Common myeloid progenitor, CD34-positive (primary cell): ENCODE measurements at regions of chr20 and their contacts with region 1.

Region 1: GRCh38 chr20:20860078-20860806 is 147.8 kb upstream of the RALGAPA2 start:
- DNase-seq: peak; percentile 84 to 91 (median 89)
- H3K4me3 ChIP-seq: no peak overlapping the region
- H3K27ac ChIP-seq: no peak overlapping the region
- H3K4me1 ChIP-seq: peaks cover 0 to 14% (median 7%) of the 10 kb centered on the region in 4 experiments
- H3K27me3 ChIP-seq: peaks cover 0 to 9% (median 4%) of the 10 kb centered on the region in 5 experiments

Region 2: GRCh38 chr20:20849161-20849560 is 11.1 kb before region 1 on chr20:
- CTCF ChIA-PET with region 1: interaction called, 18 read pairs
- POLR2A ChIA-PET with region 1: interaction called, 3 read pairs
- DNase-seq: no peak
- H3K4me3 ChIP-seq: no peak overlapping the region
- H3K27ac ChIP-seq: no peak overlapping the region
- H3K4me1 ChIP-seq: peaks cover 0 to 3% (median 1%) of the 10 kb centered on the region in 4 experiments
- H3K27me3 ChIP-seq: peaks cover 0 to 4% (median 0%) of the 10 kb centered on the region in 5 experiments

Region 3: DNA sequence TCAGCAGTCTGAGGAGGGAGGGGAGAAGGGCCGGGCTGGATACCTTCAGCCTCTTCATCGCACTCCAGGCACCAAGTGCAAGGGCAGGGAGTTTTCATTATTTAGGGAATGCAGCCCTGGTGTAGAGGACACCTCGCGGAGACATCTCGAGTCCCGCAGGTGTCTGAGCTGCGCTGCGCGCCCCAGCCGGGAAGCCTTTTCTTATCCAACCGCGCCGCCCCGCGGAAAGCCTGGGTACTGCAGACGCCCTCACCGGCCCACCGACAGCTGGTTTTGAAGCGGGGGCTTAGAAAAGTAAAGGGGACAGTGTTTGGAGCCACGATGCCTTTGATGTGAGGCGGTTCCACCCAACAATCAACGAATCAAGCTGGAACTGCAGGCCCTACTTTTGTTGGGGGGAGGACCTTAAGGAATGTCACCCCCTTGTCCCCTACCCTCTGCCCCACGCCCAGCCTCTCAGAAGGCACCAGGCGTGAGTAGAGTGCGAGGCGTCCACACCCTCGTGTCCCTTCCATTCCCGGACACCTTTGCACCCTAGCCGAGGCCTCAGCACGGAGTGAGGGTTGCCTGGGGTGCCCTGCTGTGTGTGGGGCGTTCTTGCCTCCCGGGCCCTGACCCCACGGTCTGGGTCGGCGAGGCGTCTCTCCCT is 645.0 kb after region 1 on chr20:
- CTCF ChIA-PET with region 1: interaction called, 16 read pairs
- POLR2A ChIA-PET with region 1: no interaction called
- DNase-seq: peak; percentile 46 to 72 (median 65)
- H3K4me3 ChIP-seq: peak overlapping the region in 4 of 7 experiments; percentile 37 to 57 (median 46)
- H3K27ac ChIP-seq: no peak overlapping the region
- H3K4me1 ChIP-seq: peaks cover 0 to 22% (median 18%) of the 10 kb centered on the region in 4 experiments
- H3K27me3 ChIP-seq: peaks cover 5 to 98% (median 50%) of the 10 kb centered on the region in 5 experiments